Gastrocnemius medialis (tissue), 4 donors: ENCODE measurements at regions of chr2 and their contacts with region 1.

Region 1: GRCh38 chr2:25991965-25992364 is 9.7 kb upstream of the KIF3C start:
- DNase-seq: no peak
- ATAC-seq: peak; percentile 38 to 40
- H3K4me3 ChIP-seq: no peak overlapping the region
- H3K27ac ChIP-seq: peak overlapping the region in 2 of 4 donors; percentile 6 to 22
- H3K4me1 ChIP-seq: peaks cover 0 to 10% of the 10 kb centered on the region in 2 donors
- H3K27me3 ChIP-seq: no peaks in the 10 kb centered on the region
- CTCF ChIP-seq: no peak
- POLR2A ChIP-seq: no peak

Region 2: GRCh38 chr2:25951071-25951547 is 40.9 kb before region 1 on chr2:
- in situ Hi-C with region 1: no loop called
- intact Hi-C with region 1: loop called (anchors 5 kb)
- DNase-seq: peak; percentile 59 to 71
- ATAC-seq: peak; percentile 91 to 97
- H3K4me3 ChIP-seq: no peak overlapping the region
- H3K27ac ChIP-seq: peak overlapping the region in 2 of 4 donors; percentile 29 to 48
- H3K4me1 ChIP-seq: no peaks in the 10 kb centered on the region
- H3K27me3 ChIP-seq: no peaks in the 10 kb centered on the region
- CTCF ChIP-seq: peak; percentile 90 to 95 (median 92)
- POLR2A ChIP-seq: no peak

Region 3: GRCh38 chr2:26033818-26034636 is 42.1 kb after region 1 on chr2 and contains the start of gene RAB10:
- in situ Hi-C with region 1: no loop called
- intact Hi-C with region 1: loop called (anchors 2 kb)
- DNase-seq: peak; percentile 98 to 99
- ATAC-seq: peak; percentile 82 to 85
- H3K4me3 ChIP-seq: peak within 1 kb of the TSS; percentile 83 to 99 (median 92)
- H3K27ac ChIP-seq: peak within 1 kb of the TSS; percentile 99 to 100 (median 99)
- H3K4me1 ChIP-seq: peaks cover 29 to 38% of the 10 kb centered on the region in 2 donors
- H3K27me3 ChIP-seq: no peaks in the 10 kb centered on the region
- CTCF ChIP-seq: peak in 2 of 5 experiments; percentile 17 to 21
- POLR2A ChIP-seq: peak; percentile 99 to 100
- total RNA-seq, gene RAB10: 138 to 234 (median 168) TPM

Region 4: DNA sequence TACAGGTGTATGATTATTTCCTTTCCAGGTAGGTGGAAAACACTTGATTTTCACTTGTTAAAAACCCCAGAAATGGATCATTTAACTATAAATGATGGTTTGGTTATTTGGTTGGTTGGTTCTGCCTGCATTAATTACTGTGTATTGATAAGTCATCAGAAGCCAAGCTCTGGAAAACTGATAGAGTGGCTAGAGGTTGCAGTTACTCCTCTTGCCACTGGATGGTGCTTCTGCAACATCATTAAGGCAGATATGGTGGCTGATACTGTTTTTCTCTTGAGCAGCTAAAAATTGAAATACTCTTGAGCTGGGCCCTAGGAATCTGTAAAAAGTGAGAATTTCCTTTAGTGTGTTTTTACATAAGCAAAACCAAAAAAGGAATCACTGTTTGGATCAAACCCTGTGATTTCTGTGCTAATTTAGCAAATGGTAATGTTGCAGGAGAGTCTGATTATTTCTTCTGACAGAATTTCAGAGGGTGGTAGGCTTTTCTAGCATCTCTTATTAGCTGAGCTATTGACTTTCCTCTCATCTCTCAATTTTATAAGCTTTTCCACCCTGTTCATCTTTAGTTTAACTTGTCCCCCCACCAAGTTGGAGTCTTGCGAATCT is 96.2 kb after region 1 on chr2:
- in situ Hi-C with region 1: loop called in 1 of 4 experiments (anchors 10 kb)
- intact Hi-C with region 1: loop called (anchors 1 kb)
- DNase-seq: no peak
- ATAC-seq: peak; percentile 66 to 69
- H3K4me3 ChIP-seq: no peak overlapping the region
- H3K27ac ChIP-seq: peak overlapping the region; percentile 70 to 84 (median 77)
- H3K4me1 ChIP-seq: peaks cover 39 to 52% of the 10 kb centered on the region in 2 donors
- H3K27me3 ChIP-seq: no peaks in the 10 kb centered on the region
- CTCF ChIP-seq: peak; percentile 70 to 82 (median 76)
- POLR2A ChIP-seq: no peak

Region 5: GRCh38 chr2:26144953-26145680 is 153.2 kb after region 1 on chr2:
- in situ Hi-C with region 1: loop called (anchors 5 kb)
- intact Hi-C with region 1: loop called (anchors 1 kb)
- DNase-seq: peak in 1 of 2 donors; percentile 49
- ATAC-seq: peak; percentile 57 to 61
- H3K4me3 ChIP-seq: no peak overlapping the region
- H3K27ac ChIP-seq: peak overlapping the region in 1 of 4 donors; percentile 13
- H3K4me1 ChIP-seq: peaks cover 3 to 10% of the 10 kb centered on the region in 2 donors
- H3K27me3 ChIP-seq: no peaks in the 10 kb centered on the region
- CTCF ChIP-seq: peak; percentile 78 to 85 (median 81)
- POLR2A ChIP-seq: no peak

Region 6: DNA sequence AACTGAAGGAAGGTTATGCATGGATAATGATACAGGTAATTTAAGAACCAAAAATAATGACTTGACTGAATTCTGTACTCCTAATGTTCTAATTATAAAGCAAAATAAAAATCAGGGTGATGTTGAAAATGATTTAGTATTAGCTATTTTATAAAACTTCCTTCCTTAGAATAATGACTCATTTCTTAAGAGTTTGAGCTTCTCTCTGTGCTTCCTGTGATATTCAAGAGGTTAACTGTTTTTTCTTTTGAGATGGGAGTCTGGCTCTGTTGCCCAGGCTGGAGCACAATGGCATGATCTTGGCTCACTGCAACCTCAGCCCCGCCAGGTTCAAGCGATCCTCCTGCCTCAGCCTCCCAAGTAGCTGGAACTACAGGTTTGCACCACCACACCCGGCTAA is 237.6 kb after region 1 on chr2:
- in situ Hi-C with region 1: no loop called
- intact Hi-C with region 1: no loop called
- DNase-seq: no peak
- ATAC-seq: no peak
- H3K4me3 ChIP-seq: no peak overlapping the region
- H3K27ac ChIP-seq: no peak overlapping the region
- H3K4me1 ChIP-seq: peaks cover 6% of the 10 kb centered on the region in 2 donors
- H3K27me3 ChIP-seq: no peaks in the 10 kb centered on the region
- CTCF ChIP-seq: no peak
- POLR2A ChIP-seq: no peak

Region 7: GRCh38 chr2:26244309-26245121 is 252.6 kb after region 1 on chr2 and contains the starts of genes HADHA and HADHB:
- in situ Hi-C with region 1: no loop called
- intact Hi-C with region 1: loop called (anchors 5 kb)
- DNase-seq: peak; percentile 91 to 95
- ATAC-seq: peak; percentile 74 to 80
- H3K4me3 ChIP-seq: peak within 1 kb of the TSS; percentile 85 to 96 (median 92)
- H3K27ac ChIP-seq: peak within 1 kb of the TSS; percentile 95 to 98 (median 97)
- H3K4me1 ChIP-seq: peaks cover 50 to 63% of the 10 kb centered on the region in 2 donors
- H3K27me3 ChIP-seq: no peaks in the 10 kb centered on the region
- CTCF ChIP-seq: peak in 3 of 5 experiments; percentile 31 to 47 (median 41)
- POLR2A ChIP-seq: peak; percentile 87 to 91
- total RNA-seq, gene HADHA: 443 to 480 (median 462) TPM
- total RNA-seq, gene HADHB: 719 to 936 (median 781) TPM